ENCODE measurements at regions of chr2 and their contacts with region 1.

Region 1: GRCh38 chr2:44981136-44982108 is 27.8 kb downstream of the SIX2 start:
- DNase-seq: peak; percentile 85
- H3K4me3 ChIP-seq: no peak overlapping the region
- H3K27ac ChIP-seq: no peak overlapping the region
- H3K4me1 ChIP-seq: no peaks in the 10 kb centered on the region
- H3K27me3 ChIP-seq: no peaks in the 10 kb centered on the region
- CTCF ChIP-seq: peak; percentile 86

Region 2: DNA sequence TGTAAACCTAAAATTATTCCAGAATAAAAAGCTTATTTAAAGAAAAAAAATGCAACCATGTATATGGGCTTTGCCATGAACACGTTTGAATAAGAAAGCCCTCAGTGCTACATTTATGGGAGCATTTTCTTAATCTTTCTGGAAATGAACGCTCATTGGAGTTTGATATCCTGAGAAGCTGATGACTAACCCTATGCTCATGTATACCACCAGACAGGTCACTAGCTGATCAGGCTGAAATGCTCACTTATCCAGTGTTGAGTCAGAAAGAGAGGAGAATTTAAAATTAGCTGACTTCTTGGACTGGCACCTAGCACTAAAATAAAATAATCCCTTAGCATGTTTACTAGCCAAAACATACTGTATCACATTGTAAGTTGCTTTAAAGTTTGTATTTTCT is 294.9 kb before region 1 on chr2:
- CTCF ChIA-PET with region 1: no interaction called
- POLR2A ChIA-PET with region 1: no interaction called
- intact Hi-C with region 1: no loop called
- DNase-seq: no peak
- H3K4me3 ChIP-seq: no peak overlapping the region
- H3K27ac ChIP-seq: no peak overlapping the region
- H3K4me1 ChIP-seq: no peaks in the 10 kb centered on the region
- H3K27me3 ChIP-seq: no peaks in the 10 kb centered on the region
- CTCF ChIP-seq: no peak

Region 3: GRCh38 chr2:45119855-45120254 is 138.4 kb after region 1 on chr2:
- CTCF ChIA-PET with region 1: no interaction called
- POLR2A ChIA-PET with region 1: no interaction called
- intact Hi-C with region 1: no loop called
- DNase-seq: no peak
- H3K4me3 ChIP-seq: no peak overlapping the region
- H3K27ac ChIP-seq: no peak overlapping the region
- H3K4me1 ChIP-seq: no peaks in the 10 kb centered on the region
- H3K27me3 ChIP-seq: no peaks in the 10 kb centered on the region
- CTCF ChIP-seq: no peak

Region 4: GRCh38 chr2:45578056-45578809 is 596.8 kb after region 1 on chr2:
- CTCF ChIA-PET with region 1: interaction called, 4 read pairs
- POLR2A ChIA-PET with region 1: no interaction called
- intact Hi-C with region 1: loop called (anchors 1 kb)
- DNase-seq: peak; percentile 78
- H3K4me3 ChIP-seq: no peak overlapping the region
- H3K27ac ChIP-seq: no peak overlapping the region
- H3K4me1 ChIP-seq: peaks cover 26% of the 10 kb centered on the region
- H3K27me3 ChIP-seq: no peaks in the 10 kb centered on the region
- CTCF ChIP-seq: peak; percentile 81

Measured in A673 (cell line).